ENCODE measurements at regions of chr3 and their contacts with region 1.

Region 1: DNA sequence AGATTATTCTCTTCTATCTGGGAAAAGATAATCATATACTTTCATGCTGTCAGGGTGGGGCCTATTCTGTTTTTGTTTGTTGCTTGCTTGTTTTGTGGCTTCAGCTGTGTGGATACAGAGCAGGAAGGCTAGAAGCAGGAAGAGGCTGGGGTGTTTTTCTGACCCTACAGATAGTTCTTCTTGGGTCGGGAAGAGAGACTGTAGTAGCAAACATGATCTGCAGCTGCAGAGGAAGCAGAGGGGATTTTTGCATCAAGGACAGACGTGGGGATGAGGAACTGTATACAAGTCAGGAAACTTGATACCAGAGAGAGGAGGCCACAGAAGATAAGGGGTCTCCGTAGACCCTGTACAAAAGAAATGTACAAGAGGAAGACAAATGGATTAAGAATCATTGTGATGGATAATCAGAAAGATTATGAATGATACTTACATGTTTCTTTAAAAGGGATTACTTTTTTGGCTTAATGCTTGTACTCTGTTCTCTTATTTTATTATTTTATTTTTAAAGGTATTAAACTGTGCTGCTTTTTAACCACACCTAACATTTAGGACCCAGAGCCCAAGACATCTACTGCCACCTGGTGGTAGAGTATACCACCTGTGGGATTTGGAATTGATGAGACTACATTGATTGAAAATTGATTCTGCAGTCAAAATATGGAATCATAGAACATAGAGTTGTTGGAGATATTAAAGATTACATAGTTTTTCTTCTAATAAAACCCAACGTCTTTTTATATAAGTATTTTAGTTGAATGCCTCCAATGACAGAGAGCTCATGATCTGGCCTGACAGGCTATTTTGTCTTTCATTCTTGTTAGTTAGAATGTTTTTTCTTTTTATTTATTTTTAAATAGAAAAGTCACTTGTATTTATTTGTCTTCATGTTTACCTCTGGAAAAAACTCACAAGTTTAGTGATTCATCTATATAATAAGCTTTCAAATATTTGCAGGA is 87.3 kb upstream of the ROPN1 start:
- DNase-seq: peak in 1 of 10 donors; percentile 29
- H3K4me3 ChIP-seq: no peak overlapping the region
- H3K27ac ChIP-seq: no peak overlapping the region
- H3K27me3 ChIP-seq: no peaks in the 10 kb centered on the region
- CTCF ChIP-seq: peak; percentile 75 to 95 (median 88)

Region 2: GRCh38 chr3:124032648-124033359 is 46.4 kb before region 1 on chr3:
- intact Hi-C with region 1: loop called (anchors 5 kb)
- DNase-seq: peak; percentile 57 to 91 (median 79)
- H3K4me3 ChIP-seq: peak overlapping the region; percentile 62 to 95 (median 78)
- H3K27ac ChIP-seq: peak overlapping the region in 58 of 59 donors; percentile 10 to 93 (median 84)
- H3K27me3 ChIP-seq: peaks cover 0 to 2% (median 0%) of the 10 kb centered on the region in 45 donors
- CTCF ChIP-seq: peak in 55 of 56 donors; percentile 37 to 84 (median 65)